Gastrocnemius medialis (tissue), 4 donors: ENCODE measurements at regions of chr4 and their contacts with region 1.

Region 1: DNA sequence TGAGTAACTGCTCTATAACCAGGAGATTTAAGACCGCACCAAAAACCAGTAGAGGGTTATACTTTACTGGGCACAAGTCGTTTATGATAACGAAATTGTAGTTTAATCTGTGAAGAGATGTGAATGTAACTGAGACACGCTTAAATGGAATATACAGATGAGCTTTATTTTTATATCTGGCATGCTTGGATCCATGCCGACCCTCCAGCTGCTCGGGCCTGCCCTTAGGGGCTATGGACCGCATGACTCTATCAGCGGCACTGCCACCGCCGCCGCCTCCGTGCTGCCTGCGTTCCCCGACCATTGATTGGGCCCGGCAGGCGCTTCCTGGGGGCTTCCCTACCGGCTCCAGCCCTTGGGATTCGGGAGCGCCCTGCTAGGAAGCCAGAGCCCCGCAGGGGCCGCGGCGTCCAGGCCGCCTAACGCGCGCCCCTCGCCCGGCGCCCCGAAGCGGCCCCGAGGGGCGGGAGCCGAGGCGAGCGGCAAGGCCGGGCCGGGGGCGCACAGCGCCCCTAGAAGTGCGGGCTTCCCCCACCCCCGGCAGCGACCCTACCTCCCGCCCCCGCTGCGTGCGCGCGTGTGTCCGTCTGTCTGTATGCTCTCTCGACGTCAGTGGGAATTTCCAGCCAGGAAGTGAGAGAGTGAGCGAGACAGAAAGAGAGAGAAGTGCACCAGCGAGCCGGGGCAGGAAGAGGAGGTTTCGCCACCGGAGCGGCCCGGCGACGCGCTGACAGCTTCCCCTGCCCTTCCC is at the start of gene NFKB1:
- DNase-seq: peak; percentile 37 to 66
- ATAC-seq: peak; percentile 56 to 66
- H3K4me3 ChIP-seq: peak within 1 kb of the TSS; percentile 71 to 98 (median 88)
- H3K27ac ChIP-seq: peak within 1 kb of the TSS; percentile 97 to 99 (median 98)
- H3K4me1 ChIP-seq: peaks cover 37 to 43% of the 10 kb centered on the region in 2 donors
- H3K27me3 ChIP-seq: no peaks in the 10 kb centered on the region
- CTCF ChIP-seq: no peak
- POLR2A ChIP-seq: peak in 1 of 2 donors; percentile 50
- total RNA-seq, gene NFKB1: 20.0 to 27.2 (median 22.7) TPM

Region 2: DNA sequence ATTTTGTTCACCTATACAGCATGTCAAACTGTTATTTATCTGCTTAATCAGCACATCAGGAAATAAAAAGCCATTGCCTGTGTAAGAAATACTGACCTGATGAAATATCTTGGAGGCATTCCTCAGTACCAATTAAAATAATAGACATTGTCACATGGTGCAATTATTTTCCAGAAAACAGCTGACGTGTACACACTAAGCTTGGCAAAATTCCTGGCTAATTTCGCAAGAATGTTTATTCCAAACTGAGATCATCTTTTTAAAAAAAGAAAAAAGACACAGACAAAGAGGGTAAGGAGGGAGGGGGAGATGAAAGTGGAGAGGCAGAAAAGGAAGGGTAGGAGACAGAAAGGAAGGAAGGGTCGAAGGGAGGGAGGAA is 61.6 kb before region 1 on chr4:
- in situ Hi-C with region 1: no loop called
- intact Hi-C with region 1: loop called (anchors 2 kb)
- DNase-seq: peak in 1 of 2 donors; percentile 23
- ATAC-seq: peak; percentile 89 to 97
- H3K4me3 ChIP-seq: peak overlapping the region in 1 of 4 donors; percentile 18
- H3K27ac ChIP-seq: peak overlapping the region; percentile 58 to 70 (median 66)
- H3K4me1 ChIP-seq: peaks cover 15 to 18% of the 10 kb centered on the region in 2 donors
- H3K27me3 ChIP-seq: no peaks in the 10 kb centered on the region
- CTCF ChIP-seq: no peak
- POLR2A ChIP-seq: no peak

Region 3: DNA sequence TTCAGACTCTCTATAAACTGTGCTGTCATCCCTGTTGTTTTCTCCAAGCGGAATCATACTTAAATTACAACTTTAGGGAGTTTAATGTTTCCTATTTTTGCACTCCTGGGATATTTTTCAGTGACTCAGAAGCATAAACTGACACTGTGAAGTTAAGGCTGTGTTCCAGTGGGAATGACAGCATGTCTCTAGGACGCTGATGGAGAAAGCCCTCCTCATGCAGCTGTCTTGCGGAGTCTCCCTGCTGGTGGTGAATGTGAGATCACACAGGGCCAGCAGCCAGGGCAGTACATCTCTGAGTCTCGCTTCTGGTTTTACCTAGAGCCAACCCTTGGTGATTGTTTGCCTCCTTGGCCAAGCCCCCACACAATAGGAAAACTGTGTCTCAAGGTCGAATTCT is 53.6 kb after region 1 on chr4:
- in situ Hi-C with region 1: no loop called
- intact Hi-C with region 1: loop called (anchors 5 kb)
- DNase-seq: peak; percentile 53 to 86
- ATAC-seq: peak; percentile 98 to 100
- H3K4me3 ChIP-seq: no peak overlapping the region
- H3K27ac ChIP-seq: peak overlapping the region; percentile 6 to 72 (median 60)
- H3K4me1 ChIP-seq: peaks cover 28 to 31% of the 10 kb centered on the region in 2 donors
- H3K27me3 ChIP-seq: no peaks in the 10 kb centered on the region
- CTCF ChIP-seq: no peak
- POLR2A ChIP-seq: no peak

Region 4: DNA sequence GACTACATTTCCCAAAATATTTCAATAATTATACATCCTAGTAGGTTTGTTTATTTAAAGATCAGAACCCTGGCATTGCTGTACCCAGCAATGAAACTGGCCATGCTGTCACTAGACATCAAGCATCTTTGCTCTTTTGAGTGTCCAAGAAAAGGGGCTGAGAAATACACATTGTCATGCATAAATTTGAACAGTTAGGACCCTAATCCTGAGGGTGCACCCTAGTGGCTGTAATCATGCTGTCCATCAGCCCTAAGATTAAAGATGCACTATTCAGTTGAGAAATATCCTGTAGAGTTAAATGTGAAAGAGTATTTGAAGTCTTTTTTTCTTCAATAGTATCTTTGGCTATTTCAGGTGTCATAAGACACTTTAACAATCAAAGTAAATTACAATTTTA is 109.1 kb after region 1 on chr4:
- in situ Hi-C with region 1: no loop called
- intact Hi-C with region 1: loop called (anchors 10 kb)
- DNase-seq: no peak
- ATAC-seq: no peak
- H3K4me3 ChIP-seq: no peak overlapping the region
- H3K27ac ChIP-seq: no peak overlapping the region
- H3K4me1 ChIP-seq: no peaks in the 10 kb centered on the region
- H3K27me3 ChIP-seq: no peaks in the 10 kb centered on the region
- CTCF ChIP-seq: peak in 1 of 5 experiments; percentile 10
- POLR2A ChIP-seq: no peak

Region 5: DNA sequence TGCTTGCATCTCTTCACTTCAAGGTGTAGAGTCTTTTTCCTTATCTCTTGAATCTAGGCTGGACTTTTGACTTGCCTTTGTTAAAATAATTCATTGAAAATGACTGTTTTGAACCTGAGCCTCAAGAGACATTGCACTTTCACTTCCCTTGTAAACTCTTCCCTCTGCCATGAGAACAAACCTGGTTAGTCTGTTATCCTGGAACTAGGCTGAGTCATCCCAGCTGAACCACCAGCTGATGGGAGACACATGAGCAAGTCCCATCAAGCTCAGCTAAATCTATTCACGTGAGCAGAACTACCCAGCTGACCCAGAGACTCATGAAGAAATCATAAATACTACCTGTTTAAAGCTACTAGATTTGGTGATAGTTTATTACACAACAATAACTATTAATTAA is 899.5 kb after region 1 on chr4:
- in situ Hi-C with region 1: no loop called
- intact Hi-C with region 1: no loop called
- DNase-seq: no peak
- ATAC-seq: no peak
- H3K4me3 ChIP-seq: no peak overlapping the region
- H3K27ac ChIP-seq: no peak overlapping the region
- H3K4me1 ChIP-seq: no peaks in the 10 kb centered on the region
- H3K27me3 ChIP-seq: no peaks in the 10 kb centered on the region
- CTCF ChIP-seq: no peak
- POLR2A ChIP-seq: no peak